ENCODE measurements at regions of chr14 and their contacts with region 1.

Region 1: DNA sequence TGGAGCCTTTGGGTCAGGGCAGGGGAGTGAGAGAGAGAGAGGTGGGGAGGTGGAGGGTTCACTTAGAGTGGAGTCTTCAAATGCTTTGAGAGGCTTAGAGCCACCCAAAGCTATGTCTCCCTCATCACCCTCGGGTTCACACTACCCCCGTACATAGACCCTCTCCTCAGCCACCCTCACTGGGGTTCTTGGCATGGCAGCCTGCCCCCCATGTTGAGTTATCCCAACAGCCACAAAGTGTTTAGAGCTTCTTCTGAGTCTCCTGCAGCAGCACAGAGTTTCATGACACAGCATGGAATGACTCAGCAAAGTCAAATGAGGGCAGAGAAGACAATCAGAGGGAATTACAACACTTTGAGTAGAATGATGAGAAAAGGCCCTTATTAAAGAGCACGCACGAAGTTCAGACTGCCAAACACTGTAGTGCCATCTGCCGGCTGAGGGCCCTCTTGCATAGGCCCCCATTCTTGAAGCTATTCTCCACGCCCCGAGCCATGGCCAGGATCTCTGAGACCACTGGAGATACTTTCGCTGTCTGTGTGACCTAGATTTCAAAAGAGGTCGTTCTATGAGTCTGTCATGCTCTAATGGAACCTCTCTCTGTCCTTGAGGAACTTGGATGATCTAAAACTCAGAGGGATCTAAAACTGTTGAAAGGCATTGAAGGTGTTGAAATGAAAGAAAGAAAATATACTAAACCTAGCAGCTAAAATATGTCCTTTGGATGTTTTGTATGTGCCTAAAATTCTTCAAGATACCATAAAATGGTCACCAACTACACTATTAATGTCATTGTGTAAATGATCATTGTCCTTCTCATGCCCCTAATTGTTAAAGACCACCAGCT is 221.9 kb downstream of the PELI2 start:
- DNase-seq: peak; percentile 72
- H3K4me3 Mint-ChIP-seq: no peak overlapping the region
- H3K27ac Mint-ChIP-seq: no peak overlapping the region
- H3K4me1 Mint-ChIP-seq: peaks cover 2% of the 10 kb centered on the region
- H3K27me3 Mint-ChIP-seq: no peaks in the 10 kb centered on the region

Region 2: DNA sequence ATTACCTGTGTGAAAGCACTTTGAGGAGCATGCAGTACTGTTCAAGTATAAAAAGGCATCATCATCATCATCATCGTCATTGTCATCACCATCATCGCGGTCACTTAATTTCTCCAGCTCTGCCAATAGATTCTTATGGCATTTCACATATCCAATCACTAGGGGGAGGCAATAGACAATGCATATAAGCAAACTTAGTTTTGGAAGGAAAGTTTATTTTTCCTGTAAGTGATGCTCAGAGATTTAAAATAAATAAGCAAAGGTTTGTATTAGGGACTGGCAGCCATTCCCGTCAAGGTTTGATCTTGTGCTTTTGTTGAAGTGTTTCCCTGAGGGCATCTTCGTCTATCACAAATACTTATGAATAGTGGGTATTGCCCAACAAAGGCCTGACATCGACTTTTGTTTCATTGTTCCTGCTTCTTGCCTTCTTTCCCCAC is 632.7 kb before region 1 on chr14:
- CTCF ChIA-PET with region 1: interaction called, 4 read pairs
- POLR2A ChIA-PET with region 1: no interaction called
- intact Hi-C with region 1: loop called (anchors 2 kb)
- DNase-seq: no peak
- H3K4me3 Mint-ChIP-seq: no peak overlapping the region
- H3K27ac Mint-ChIP-seq: no peak overlapping the region
- H3K4me1 Mint-ChIP-seq: no peaks in the 10 kb centered on the region
- H3K27me3 Mint-ChIP-seq: no peaks in the 10 kb centered on the region

Region 3: GRCh38 chr14:55731881-55732498 is 608.1 kb before region 1 on chr14:
- CTCF ChIA-PET with region 1: interaction called, 51 read pairs
- POLR2A ChIA-PET with region 1: no interaction called
- intact Hi-C with region 1: no loop called
- DNase-seq: peak; percentile 59
- H3K4me3 Mint-ChIP-seq: no peak overlapping the region
- H3K27ac Mint-ChIP-seq: no peak overlapping the region
- H3K4me1 Mint-ChIP-seq: no peaks in the 10 kb centered on the region
- H3K27me3 Mint-ChIP-seq: no peaks in the 10 kb centered on the region

Region 4: GRCh38 chr14:55864890-55865655 is 475.0 kb before region 1 on chr14:
- CTCF ChIA-PET with region 1: no interaction called
- POLR2A ChIA-PET with region 1: no interaction called
- intact Hi-C with region 1: loop called (anchors 10 kb)
- DNase-seq: no peak
- H3K4me3 Mint-ChIP-seq: no peak overlapping the region
- H3K27ac Mint-ChIP-seq: no peak overlapping the region
- H3K4me1 Mint-ChIP-seq: no peaks in the 10 kb centered on the region
- H3K27me3 Mint-ChIP-seq: peaks cover 7% of the 10 kb centered on the region

Region 5: DNA sequence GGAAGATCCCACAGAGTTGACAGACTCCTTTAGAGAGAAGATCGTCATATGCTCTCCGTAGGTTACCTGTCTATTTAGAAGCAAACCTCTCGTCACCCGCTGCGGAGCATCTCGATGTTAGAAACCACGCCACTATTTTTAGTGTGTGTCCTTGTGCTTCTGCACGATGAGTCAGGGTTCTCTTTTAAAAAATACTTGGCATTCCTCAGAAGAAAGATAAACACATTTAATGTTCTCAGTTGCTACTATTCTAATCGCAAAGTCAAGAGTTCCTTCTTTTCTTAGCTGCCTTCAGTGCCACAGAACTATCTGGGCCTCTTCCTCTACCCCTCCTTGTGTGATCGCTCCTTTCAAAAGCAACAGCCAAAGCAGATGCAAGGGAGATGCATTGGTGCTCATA is 29.4 kb before region 1 on chr14:
- CTCF ChIA-PET with region 1: no interaction called
- POLR2A ChIA-PET with region 1: no interaction called
- intact Hi-C with region 1: no loop called
- DNase-seq: no peak
- H3K4me3 Mint-ChIP-seq: no peak overlapping the region
- H3K27ac Mint-ChIP-seq: no peak overlapping the region
- H3K4me1 Mint-ChIP-seq: no peaks in the 10 kb centered on the region
- H3K27me3 Mint-ChIP-seq: no peaks in the 10 kb centered on the region

Measured in activated CD4-positive, alpha-beta memory T cell treated with anti-CD3 and anti-CD28 coated beads for 36 hours (primary cell).